ENCODE measurements at regions of chr1 and their contacts with region 1.

Region 1: GRCh38 chr1:56821140-56821797 is 2.1 kb upstream of the FYB2 start:
- DNase-seq: no peak
- H3K4me3 ChIP-seq: no peak overlapping the region
- CTCF ChIP-seq: peak; percentile 97

Region 2: DNA sequence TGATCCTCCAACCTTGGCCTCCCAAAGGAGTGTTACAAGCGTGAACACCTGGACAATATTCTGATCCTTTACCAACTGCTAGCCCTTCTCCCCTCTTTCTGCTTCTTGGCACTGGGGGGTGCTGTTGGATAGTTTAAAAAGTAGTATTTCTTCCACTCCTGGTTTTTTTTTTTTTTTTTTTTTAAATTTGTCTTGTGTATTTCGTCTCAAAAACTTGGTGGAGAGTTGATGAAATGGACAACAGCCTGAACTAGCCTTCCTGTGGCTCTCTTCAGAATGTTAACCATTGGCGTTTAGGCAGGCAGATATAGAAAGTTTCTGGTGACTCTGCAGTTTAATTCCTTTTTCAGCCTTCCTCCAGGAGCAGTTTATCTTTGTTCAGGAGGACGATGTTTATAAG is 1536.4 kb before region 1 on chr1:
- CTCF ChIA-PET with region 1: interaction called, 37 read pairs
- POLR2A ChIA-PET with region 1: no interaction called
- DNase-seq: no peak
- H3K4me3 ChIP-seq: no peak overlapping the region
- CTCF ChIP-seq: peak; percentile 53

Region 3: DNA sequence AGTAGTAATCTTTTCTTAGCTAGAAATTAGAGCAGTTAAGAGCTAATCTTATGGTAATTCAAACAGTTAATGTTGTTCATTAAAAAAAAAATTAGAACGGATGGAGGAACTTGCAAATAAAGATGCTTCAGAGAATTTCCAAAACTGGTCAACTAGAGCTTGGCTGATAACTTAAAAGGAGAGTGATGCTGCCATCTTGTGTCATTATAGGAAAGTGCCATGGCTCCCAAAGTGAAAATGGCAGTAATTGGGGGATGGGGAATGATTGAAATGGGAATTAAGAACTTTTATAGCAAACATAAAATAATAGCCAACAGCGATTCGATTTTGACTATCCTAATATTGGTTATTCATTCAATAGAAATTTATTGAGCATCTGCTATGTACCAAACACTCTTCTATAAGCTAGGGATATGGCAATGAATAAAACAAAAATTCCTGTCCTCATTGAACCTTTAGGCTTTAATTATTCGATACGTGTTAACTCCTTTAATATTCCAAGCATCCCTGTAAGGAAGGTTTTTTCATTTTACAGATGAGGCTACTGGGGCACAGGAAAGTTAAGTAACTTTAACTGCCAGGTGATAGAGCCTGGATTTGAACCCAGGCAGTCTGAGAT is 236.2 kb before region 1 on chr1:
- CTCF ChIA-PET with region 1: interaction called, 25 read pairs
- POLR2A ChIA-PET with region 1: no interaction called
- DNase-seq: peak; percentile 33
- H3K4me3 ChIP-seq: no peak overlapping the region
- CTCF ChIP-seq: peak; percentile 54

Region 4: DNA sequence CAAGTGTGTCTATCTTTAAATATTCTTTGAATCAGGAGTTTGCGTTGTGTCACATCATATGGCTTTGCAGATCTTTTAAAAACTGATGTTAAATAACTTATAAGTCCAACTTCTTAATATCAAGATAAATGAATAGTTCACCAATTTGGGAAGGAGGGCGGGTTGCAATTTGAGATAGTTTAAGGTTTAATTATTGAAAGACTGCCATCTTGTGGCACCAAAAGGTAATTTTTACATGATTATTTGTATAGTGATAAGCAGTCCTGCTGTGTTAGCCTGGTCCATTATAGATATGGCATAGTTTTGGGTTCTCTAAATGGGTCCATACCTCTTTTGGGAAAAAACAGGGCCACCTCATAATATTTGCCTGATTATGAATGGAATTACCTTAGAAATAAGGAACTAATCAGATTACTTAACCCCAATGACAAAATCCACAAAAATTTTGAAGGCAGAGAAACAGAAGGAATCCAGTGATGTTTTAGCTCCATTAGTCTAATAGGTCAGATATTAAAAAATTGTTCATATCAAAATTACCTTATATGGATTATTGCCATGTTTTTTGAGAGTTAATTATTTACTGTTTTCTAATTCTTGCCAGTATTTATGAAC is 111.9 kb before region 1 on chr1:
- CTCF ChIA-PET with region 1: interaction called, 34 read pairs
- POLR2A ChIA-PET with region 1: no interaction called
- DNase-seq: peak; percentile 10
- H3K4me3 ChIP-seq: no peak overlapping the region
- CTCF ChIP-seq: peak; percentile 14

Region 5: GRCh38 chr1:56798053-56798471 is 23.2 kb before region 1 on chr1:
- CTCF ChIA-PET with region 1: interaction called, 33 read pairs
- POLR2A ChIA-PET with region 1: no interaction called
- DNase-seq: no peak
- H3K4me3 ChIP-seq: no peak overlapping the region
- CTCF ChIP-seq: no peak

Region 6: DNA sequence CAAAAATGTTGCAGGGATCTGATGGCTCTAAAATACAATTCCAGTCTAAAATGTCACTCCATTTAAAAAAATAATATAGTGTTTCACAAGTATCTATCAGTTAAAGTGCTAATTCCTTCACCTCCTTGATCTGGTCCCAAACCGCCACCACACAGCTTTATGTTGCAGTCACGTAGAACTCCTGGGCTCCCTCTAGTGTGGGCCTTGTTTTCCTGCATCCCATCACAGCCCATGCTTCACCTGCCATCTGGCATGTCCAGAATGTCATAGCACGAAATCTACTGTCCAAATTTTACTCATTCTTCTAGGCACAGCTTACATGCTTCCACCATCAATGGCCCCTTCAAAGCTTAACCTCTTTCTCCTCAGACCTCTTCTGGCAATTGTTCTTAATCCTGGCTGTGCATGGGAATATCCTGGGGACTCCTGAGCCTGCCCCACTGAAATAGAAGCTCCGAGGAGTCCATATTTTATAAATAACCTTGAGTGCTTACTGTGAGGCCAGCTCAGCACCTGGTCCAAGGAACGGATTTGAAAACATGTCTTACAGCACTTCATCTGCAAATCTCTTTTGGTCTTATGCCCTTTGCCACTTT is 17.6 kb before region 1 on chr1:
- CTCF ChIA-PET with region 1: interaction called, 71 read pairs
- POLR2A ChIA-PET with region 1: no interaction called
- DNase-seq: no peak
- H3K4me3 ChIP-seq: no peak overlapping the region
- CTCF ChIP-seq: peak; percentile 74

Region 7: DNA sequence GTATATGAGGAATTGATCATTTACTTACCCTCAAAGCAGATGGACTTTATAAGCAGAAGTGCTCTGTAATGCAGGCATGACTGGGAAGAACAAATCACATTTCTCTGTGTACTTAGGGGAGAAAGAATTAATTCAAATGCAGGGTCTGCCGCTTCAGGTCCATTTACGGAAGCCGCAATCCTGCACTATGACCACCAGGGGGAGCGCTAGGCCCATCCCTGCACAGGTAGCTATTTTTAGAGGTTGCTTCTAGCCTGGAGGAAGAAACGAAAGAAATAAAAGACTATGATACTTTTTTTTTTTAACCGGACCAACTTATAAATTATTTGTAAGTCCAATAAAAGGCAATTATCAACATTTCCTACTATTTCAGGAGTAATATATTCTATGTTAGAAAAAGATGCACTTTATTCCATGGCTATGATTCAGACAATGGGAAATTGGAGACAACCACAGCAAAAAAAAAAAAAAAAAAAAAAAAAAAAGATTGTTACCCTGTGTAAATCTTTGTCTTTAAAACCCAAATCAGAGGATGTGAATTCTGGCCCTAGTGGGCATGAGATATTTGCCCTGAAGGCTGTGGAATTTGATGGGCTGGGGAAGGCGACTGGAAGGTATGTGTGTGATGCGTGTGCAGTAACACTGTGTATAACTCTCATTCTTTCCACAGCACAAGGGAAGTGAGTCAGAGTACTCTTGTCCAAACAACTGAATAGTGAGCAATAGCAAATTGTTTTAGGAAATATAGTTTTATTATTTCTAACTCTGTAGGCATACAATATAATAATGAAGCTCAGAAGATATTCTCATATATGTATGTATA is 10.8 kb after region 1 on chr1:
- CTCF ChIA-PET with region 1: interaction called, 23 read pairs
- POLR2A ChIA-PET with region 1: no interaction called
- DNase-seq: peak; percentile 91
- H3K4me3 ChIP-seq: no peak overlapping the region
- CTCF ChIP-seq: peak; percentile 84

Region 8: DNA sequence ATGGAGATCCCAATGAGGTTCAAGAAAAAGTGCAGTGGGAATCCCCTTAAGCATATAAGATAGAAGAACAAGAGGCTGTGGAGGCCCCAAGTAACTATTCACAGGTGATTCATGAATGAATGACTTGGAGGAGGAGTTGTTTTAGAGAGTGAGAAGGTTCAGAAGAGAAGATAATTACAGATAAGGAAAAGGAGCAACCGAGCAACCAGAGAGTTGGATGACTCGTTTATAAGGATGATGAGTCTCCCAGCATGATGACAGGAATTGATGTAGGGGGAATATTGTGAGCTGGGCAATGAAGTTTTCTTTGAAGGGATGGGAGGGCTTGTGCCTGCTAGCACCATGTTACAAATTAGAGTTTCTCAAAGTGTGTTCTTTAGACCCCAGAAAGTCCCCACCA is 43.2 kb after region 1 on chr1:
- CTCF ChIA-PET with region 1: no interaction called
- POLR2A ChIA-PET with region 1: no interaction called
- DNase-seq: no peak
- H3K4me3 ChIP-seq: no peak overlapping the region
- CTCF ChIP-seq: no peak

Region 9: GRCh38 chr1:57061369-57061768 is 240.1 kb after region 1 on chr1:
- CTCF ChIA-PET with region 1: no interaction called
- POLR2A ChIA-PET with region 1: no interaction called
- DNase-seq: no peak
- H3K4me3 ChIP-seq: no peak overlapping the region
- CTCF ChIP-seq: no peak